Spleen (tissue), 13 donors: ENCODE measurements at regions of chr13 and their contacts with region 1.

Region 1: GRCh38 chr13:46176756-46177155 is 5.2 kb downstream of the LCP1 start:
- DNase-seq: no peak
- H3K4me3 ChIP-seq: peak overlapping the region in 5 of 8 donors; percentile 49 to 76 (median 50)
- H3K27ac ChIP-seq: peak overlapping the region; percentile 77 to 94 (median 90)
- H3K4me1 ChIP-seq: peaks cover 37 to 78% (median 64%) of the 10 kb centered on the region in 6 donors
- H3K27me3 ChIP-seq: no peaks in the 10 kb centered on the region
- CTCF ChIP-seq: no peak
- POLR2A ChIP-seq: peak in 1 of 3 donors; percentile 67

Region 2: DNA sequence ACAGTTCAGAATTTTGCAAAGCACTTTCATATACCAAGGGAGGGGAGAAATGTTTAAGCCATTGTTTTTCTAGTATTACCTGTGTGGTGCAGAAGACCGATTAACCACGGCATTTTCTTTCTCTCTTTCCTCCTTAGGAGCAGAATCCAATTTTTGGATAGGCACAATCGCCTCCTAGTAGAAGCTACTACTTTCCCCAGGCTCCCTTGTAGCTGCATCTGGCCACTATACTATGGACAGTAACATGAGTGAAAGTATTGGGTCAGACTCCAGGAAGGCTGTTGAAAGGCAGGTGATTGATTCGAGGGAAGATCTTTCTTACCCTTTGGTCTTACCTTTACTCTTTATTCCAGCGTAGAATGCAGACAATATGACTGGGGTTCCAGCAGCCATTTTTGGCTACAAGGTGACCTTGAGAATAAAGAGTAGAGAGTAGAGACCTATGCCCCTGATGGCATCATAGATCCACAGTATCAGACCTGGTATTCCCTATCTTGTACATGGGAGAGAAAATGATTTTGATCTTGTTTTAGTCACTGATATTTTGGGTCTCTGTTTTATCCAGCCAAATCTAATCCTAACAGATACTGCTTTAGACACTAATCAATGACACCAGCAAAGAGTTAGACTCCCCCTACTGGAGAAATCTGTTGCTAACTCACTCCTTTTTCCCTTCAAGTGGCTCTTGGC is 112.0 kb after region 1 on chr13:
- intact Hi-C with region 1: loop called (anchors 10 kb)
- DNase-seq: no peak
- H3K4me3 ChIP-seq: no peak overlapping the region
- H3K27ac ChIP-seq: no peak overlapping the region
- H3K4me1 ChIP-seq: peaks cover 0 to 16% (median 4%) of the 10 kb centered on the region in 6 donors
- H3K27me3 ChIP-seq: no peaks in the 10 kb centered on the region
- CTCF ChIP-seq: peak; percentile 23 to 78 (median 63)
- POLR2A ChIP-seq: no peak